Caco-2 (cell line): ENCODE measurements at regions of chr11 and their contacts with region 1.

Region 1: DNA sequence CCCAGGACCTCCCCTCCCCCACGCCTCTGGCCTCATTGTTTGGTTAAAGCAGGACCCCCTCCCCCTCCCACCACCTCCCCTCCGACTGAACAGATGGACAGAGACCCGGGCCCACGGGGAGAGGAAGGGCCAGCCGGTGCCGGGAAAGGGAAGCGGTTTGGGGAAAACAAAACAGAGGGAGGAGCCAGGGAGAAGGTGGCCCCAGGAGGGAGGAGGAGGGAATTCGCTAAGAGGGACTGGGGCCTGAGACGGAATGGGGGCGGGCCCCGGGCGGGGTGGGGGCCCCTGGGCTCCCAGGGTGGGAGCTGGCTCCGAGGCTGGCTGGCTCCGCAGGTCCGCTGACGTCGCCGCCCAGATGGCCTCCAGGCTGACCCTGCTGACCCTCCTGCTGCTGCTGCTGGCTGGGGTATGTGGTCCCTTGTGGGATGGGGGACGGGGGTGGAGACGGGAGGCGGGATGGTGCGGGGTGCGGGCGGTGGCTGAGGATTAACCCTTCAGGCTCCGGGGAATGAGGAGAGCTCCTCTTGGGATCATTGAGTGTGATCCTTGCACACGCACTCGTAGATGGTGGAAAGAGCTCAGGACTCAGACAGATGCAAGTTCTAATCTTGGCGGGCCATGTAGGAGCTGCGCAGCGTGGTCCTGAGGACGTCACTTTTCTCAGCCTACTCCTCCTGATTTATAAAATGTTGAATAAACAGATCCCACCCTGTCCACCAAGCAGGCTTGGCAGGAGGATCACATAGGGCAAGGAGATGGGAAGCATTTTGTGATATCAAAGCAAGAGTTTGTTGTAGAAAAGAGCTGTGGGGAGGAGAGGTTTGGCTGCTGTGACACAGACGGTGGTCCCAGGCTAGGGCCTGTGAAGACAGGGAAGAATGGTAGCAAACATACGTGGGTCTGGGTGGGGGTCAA is 688 bp downstream of the SERPING1 start:
- DNase-seq: peak; percentile 61 to 78
- H3K4me3 ChIP-seq: peak overlapping the region; percentile 21
- H3K4me3 Mint-ChIP-seq: peak overlapping the region; percentile 65
- H3K27ac Mint-ChIP-seq: no peak overlapping the region
- H3K4me1 ChIP-seq: peaks cover 12% of the 10 kb centered on the region
- H3K4me1 Mint-ChIP-seq: peaks cover 13% of the 10 kb centered on the region
- H3K27me3 ChIP-seq: no peaks in the 10 kb centered on the region
- H3K27me3 Mint-ChIP-seq: no peaks in the 10 kb centered on the region
- CTCF ChIP-seq: no peak

Region 2: DNA sequence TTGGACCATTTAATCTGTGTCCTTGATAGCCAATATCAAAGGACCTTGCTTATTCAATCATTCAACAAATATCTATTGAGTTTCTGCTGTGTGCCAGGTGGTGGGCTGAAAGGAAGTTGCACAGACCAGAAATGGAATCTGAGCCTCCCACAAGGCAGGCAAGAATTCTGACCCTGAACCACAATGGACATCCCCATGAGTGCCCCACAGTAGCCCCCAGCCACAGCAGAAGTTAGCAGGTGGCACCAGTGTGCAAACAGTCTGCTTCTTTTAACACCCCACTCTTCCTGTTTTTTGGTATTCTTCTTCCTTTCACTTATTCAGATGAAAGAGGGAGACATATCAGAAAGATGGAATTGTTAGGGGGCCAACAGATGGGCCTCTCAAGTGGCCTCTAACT is 12.9 kb before region 1 on chr11:
- CTCF ChIA-PET with region 1: no interaction called
- POLR2A ChIA-PET with region 1: no interaction called
- intact Hi-C with region 1: no loop called
- DNase-seq: no peak
- H3K4me3 ChIP-seq: no peak overlapping the region
- H3K4me3 Mint-ChIP-seq: no peak overlapping the region
- H3K27ac Mint-ChIP-seq: no peak overlapping the region
- H3K4me1 ChIP-seq: 0 out of 2 replicates have a peak, but pooled peaks cover 5% of the 10 kb centered on the region
- H3K4me1 Mint-ChIP-seq: no peaks in the 10 kb centered on the region
- H3K27me3 ChIP-seq: no peaks in the 10 kb centered on the region
- H3K27me3 Mint-ChIP-seq: no peaks in the 10 kb centered on the region
- CTCF ChIP-seq: no peak

Region 3: DNA sequence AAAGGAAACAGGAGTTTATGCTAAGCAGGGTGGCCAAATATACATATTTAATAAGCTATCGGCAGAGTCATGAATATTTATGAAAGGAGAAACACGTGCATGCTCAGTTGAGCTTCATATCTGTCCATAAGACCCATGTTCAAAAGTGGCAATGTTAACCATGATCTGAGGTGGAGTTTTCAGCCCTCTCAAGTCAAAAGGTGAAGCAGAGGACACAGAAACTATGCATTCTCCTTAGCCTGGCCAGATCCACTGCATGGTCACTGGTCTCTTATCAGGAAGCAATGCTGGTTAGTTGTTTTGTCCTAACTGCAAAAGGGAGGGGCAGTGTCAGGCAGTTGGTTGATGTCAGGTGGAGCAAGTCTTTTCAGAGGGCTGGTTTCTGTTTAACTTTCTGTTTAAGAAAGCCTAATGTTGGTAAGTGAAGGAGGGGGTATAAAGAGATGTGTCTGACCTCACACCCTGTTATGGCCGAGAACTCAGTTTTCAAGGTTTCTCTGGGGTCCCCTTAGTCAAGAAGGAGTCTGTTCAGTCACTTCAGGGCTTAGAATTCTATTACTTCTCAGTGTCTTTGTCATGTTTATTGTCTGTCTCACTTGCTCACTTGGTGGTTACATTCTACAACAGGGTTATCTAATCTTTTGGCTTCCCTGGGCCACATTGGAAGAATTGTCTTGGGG is 137.6 kb after region 1 on chr11:
- CTCF ChIA-PET with region 1: no interaction called
- POLR2A ChIA-PET with region 1: interaction called, 18 read pairs
- intact Hi-C with region 1: no loop called
- DNase-seq: peak; percentile 61 to 74
- H3K4me3 ChIP-seq: no peak overlapping the region
- H3K4me3 Mint-ChIP-seq: peak overlapping the region; percentile 34
- H3K27ac Mint-ChIP-seq: peak overlapping the region; percentile 65
- H3K4me1 ChIP-seq: peaks cover 17% of the 10 kb centered on the region
- H3K4me1 Mint-ChIP-seq: peaks cover 16% of the 10 kb centered on the region
- H3K27me3 ChIP-seq: no peaks in the 10 kb centered on the region
- H3K27me3 Mint-ChIP-seq: no peaks in the 10 kb centered on the region
- CTCF ChIP-seq: no peak